ENCODE measurements at regions of chr1 and their contacts with region 1.

Region 1: DNA sequence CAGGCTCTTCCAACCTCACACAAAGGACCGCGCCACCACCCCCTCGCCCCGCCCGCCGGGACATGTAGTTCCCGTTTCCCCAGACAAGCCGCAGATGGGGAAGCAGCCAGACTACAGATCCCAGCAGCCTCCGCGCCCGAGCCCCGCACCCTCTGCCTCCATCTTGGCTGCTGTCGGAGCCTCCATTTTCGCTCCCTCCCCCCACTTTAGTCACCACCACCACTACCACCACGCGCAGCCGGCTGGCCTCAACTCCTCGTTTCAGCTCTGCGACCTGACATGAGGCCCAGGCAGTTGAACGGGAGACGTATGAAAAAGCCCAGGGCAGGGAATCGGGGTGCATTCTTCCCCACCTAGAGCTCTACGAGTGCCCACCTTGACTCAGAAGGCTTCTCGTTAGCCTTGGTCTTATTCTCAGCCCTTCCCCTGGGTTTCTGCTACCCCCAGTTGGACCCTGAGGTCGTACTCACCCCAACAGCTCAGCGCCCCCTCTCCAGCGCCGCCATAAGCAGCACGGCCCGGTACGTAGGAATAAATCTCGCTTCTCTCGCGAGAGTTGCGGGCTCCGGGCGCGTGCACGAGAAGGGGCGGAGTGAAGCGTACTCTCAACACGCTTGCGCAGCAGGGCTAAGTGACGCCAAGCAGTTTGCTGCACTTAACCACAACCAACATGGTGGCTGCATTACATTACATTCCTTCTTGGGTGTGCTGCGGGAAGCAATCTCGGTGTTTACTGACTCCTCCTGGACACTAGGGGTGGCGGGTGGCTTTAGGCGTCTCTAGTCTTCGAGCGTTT is at the start of gene CSDE1:
- DNase-seq: peak; percentile 97 to 98 (median 98)
- ATAC-seq: peak; percentile 96 to 97 (median 97)
- H3K4me3 ChIP-seq: peak within 1 kb of the TSS; percentile 81 to 99 (median 92)
- H3K27ac ChIP-seq: peak within 1 kb of the TSS; percentile 92 to 100 (median 99)
- H3K4me1 ChIP-seq: peaks cover 18 to 52% (median 41%) of the 10 kb centered on the region in 12 donors
- H3K27me3 ChIP-seq: no peaks in the 10 kb centered on the region
- CTCF ChIP-seq: peak in 11 of 12 donors; percentile 16 to 59 (median 40)
- POLR2A ChIP-seq: peak in 1 of 2 donors; percentile 90
- total RNA-seq, gene CSDE1: 714 to 1,317 (median 905) TPM

Region 2: DNA sequence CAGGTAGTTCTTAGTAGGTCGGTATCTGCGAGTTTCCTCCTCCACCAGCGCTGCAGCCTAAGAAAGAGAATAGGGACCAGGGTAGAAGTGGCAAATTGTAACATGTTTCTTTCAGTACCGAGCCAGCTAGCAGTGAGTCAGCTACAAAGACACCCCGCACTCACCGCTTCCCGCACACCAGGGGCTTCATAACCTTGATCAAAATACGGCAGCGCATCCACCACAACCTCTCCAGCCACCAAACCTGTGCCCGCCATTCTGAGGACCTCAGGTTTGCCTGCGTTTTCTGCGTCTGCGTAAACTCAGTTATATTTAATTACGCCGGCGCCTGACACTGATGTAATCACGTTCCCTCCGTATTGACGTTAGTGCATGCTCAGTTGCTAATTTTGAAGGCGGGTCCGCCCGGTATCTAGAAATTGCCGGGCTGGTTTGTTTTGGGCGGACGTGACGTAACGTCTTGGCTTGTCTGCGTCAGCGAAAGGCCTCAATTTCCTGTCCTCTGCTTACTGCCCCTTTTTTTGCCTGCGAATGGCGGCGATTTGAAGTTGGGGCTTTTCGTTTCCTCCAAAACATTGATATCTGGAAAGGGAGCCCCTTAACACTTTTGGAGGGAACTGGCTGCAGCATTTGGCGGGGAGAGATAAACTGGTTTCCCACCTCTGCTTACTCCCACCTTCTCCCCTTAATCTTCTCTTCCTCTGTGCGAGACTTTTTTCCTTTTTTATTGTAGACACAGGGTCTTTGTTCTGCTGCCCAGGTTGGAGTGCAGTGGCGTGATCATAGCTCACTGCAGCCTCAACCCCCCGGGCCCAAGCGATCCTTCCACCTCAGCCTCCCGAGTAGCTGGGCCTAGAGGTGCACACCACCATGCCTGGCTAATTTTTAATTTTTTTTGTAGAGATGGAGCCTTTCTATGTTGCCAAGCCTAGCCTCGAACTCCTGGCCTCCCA is 176.0 kb before region 1 on chr1 and contains the start of gene BCAS2:
- intact Hi-C with region 1: loop called in 5 of 10 experiments (anchors 1 to 10 kb)
- DNase-seq: peak; percentile 95 to 98 (median 97)
- ATAC-seq: peak; percentile 98 to 99 (median 99)
- H3K4me3 ChIP-seq: peak within 1 kb of the TSS; percentile 41 to 89 (median 68)
- H3K27ac ChIP-seq: peak within 1 kb of the TSS; percentile 68 to 95 (median 88)
- H3K4me1 ChIP-seq: peaks cover 0 to 37% (median 22%) of the 10 kb centered on the region in 12 donors
- H3K27me3 ChIP-seq: no peaks in the 10 kb centered on the region
- CTCF ChIP-seq: no peak
- POLR2A ChIP-seq: peak in 1 of 2 donors; percentile 88
- total RNA-seq, gene BCAS2: 28.7 to 41.6 (median 34.4) TPM

Region 3: DNA sequence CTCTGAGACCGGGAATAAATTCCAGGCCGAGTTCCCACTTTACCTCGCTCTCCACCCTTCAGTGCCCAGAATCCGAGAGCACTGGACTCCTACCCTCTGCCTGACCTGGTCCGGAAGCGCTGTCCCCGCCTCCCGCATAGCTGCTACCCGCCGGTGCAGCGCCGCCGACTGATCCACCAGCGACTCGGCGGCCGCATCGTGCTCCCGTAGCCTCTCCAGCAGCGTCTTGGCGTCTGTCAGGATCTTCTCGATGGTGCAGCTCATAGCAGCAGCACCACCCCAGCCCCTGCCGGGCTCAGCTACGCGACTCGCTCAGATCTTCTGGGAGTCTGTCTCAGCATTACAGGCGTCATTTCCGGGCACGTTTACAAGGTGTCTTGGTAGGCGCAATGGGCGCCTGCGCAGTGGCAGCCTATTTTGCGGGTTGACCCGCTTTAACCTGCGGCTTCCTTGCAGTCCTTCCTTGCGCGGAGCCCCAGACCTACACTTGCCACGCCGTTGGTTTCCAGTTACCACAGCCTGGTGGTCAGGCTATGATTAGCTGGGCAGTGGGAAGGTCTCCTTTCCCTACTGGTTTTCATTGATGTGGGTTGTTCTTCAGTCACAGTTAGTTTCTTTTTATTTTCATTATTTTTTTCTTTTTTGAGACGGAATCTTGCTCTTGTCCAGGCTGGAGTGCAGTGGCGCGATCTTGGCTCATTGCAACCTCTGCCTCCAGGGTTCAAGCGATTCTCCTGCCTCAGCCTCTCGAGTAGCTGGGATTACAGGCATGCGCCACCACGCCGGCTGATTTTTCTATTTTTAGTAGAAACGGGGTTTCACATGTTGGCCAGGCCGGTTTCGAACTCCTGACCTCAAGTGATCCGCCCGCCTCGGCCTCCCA is 22.9 kb after region 1 on chr1 and contains the start of gene SIKE1:
- intact Hi-C with region 1: loop called in 1 of 10 experiments (anchors 1 kb)
- DNase-seq: peak; percentile 89 to 96 (median 95)
- ATAC-seq: peak; percentile 89 to 99 (median 99)
- H3K4me3 ChIP-seq: peak within 1 kb of the TSS; percentile 54 to 98 (median 79)
- H3K27ac ChIP-seq: peak within 1 kb of the TSS; percentile 5 to 92 (median 90)
- H3K4me1 ChIP-seq: peaks cover 0 to 16% (median 12%) of the 10 kb centered on the region in 12 donors
- H3K27me3 ChIP-seq: peaks cover 0 to 2% (median 0%) of the 10 kb centered on the region in 9 donors
- CTCF ChIP-seq: peak in 2 of 12 donors; percentile 29 to 33
- POLR2A ChIP-seq: peak in 1 of 2 donors; percentile 86
- total RNA-seq, gene SIKE1: 22.1 to 41.7 (median 34.2) TPM

Region 4: GRCh38 chr1:114803001-114803400 is 45.3 kb after region 1 on chr1:
- intact Hi-C with region 1: no loop called
- DNase-seq: no peak
- ATAC-seq: no peak
- H3K4me3 ChIP-seq: no peak overlapping the region
- H3K27ac ChIP-seq: no peak overlapping the region
- H3K4me1 ChIP-seq: no peaks in the 10 kb centered on the region
- H3K27me3 ChIP-seq: peaks cover 0 to 27% (median 0%) of the 10 kb centered on the region in 9 donors
- CTCF ChIP-seq: no peak
- POLR2A ChIP-seq: no peak